Activated CD4-positive, alpha-beta memory T cell treated with anti-CD3 and anti-CD28 coated beads, Interleukin-2, amount 10 ng/mL, durations not matched to agents 7 days and 5 days (primary cell): ENCODE measurements at regions of chr6 and their contacts with region 1.

Region 1: DNA sequence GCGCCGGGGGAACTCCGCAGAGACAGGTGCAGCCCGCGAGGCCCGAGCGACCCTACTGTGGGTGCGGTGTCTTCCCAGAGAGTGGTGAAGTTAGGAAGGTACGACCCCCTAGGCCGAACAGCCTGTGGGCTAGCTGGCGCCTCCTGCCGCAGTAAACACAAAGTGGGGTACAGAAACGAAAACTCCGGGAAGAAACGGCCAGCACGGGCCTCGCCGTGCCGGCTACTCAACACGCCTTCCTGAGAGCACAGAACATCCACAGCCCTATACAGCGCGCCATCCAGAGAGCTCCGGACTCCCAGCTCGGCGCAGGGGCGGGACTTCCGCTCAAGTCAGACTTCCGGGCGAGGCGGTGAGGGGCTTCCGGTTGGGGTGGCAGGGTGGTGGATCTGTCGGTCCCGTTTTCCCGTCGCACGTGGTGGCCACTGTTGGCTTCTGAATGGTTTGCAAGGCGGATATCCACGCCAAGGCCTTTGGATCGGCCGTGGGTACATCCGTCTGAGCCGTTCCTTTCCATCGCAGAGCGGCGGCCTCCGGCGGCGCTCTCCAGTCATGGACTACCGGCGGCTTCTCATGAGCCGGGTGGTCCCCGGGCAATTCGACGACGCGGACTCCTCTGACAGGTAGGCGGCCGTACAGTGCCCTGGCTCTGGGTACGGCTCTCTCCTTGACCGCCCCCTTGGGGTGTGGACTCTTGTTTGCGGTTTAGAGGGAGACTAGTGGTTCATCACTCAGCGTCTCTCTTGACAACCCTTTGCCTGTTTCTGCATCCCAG is at the starts of genes CAGE1 and RIOK1:
- DNase-seq: peak; percentile 96
- H3K4me3 Mint-ChIP-seq: peak within 1 kb of the TSS; percentile 85
- H3K27ac Mint-ChIP-seq: peak within 1 kb of the TSS; percentile 94
- H3K4me1 Mint-ChIP-seq: peaks cover 41% of the 10 kb centered on the region
- H3K27me3 Mint-ChIP-seq: no peaks in the 10 kb centered on the region
- total RNA-seq, gene CAGE1: 0.08 TPM in 1 of 2 experiments, not detected in the other
- total RNA-seq, gene RIOK1: 23.4 to 27.0 TPM

Region 2: GRCh38 chr6:7312616-7313504 is 76.8 kb before region 1 on chr6 and contains the start of gene SSR1:
- CTCF ChIA-PET with region 1: interaction called, 4 read pairs
- POLR2A ChIA-PET with region 1: interaction called, 61 read pairs
- DNase-seq: peak; percentile 97
- H3K4me3 Mint-ChIP-seq: peak within 1 kb of the TSS; percentile 99
- H3K27ac Mint-ChIP-seq: peak within 1 kb of the TSS; percentile 94
- H3K4me1 Mint-ChIP-seq: peaks cover 53% of the 10 kb centered on the region
- H3K27me3 Mint-ChIP-seq: no peaks in the 10 kb centered on the region
- total RNA-seq, gene SSR1: 182 to 188 TPM